Aorta (tissue), 5 donors: ENCODE measurements at regions of chr1 and their contacts with region 1.

Region 1: DNA sequence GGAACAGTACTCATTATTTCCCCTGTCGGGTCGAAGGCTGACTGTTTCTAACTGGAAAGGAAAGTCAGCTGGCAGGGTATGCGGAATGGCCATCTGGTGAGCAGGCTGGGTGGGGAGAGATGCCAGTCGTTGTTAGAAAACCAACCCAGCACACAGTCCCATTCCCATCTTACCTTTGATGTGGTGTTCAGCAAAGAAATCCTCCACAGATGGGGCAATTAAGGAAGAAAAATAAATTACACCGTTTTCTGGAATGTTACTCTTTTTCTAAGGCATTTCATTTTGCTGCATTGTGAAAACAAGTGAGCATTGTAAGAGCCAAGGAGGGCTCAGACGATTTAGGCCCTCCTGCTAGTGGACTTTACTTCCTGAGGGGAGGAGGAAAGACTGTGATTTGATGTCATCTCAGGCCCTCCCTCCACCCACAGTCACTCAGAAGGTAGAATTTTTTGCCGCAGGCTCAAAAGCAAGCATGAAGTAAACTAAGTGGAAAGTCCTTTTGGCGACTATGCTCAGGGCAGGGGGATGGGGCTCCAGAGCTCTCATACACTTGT is at the start of gene SLC16A4:
- DNase-seq: no peak
- ATAC-seq: peak; percentile 88
- H3K4me3 ChIP-seq: peak within 1 kb of the TSS; percentile 62 to 97
- H3K27ac ChIP-seq: peak within 1 kb of the TSS; percentile 69 to 94
- H3K4me1 ChIP-seq: peaks cover 2 to 3% of the 10 kb centered on the region in 2 donors
- H3K27me3 ChIP-seq: no peaks in the 10 kb centered on the region
- total RNA-seq, gene SLC16A4: 18.5 to 23.2 TPM

Region 2: GRCh38 chr1:110292031-110292741 is 98.6 kb before region 1 on chr1:
- intact Hi-C with region 1: no loop called
- DNase-seq: no peak
- ATAC-seq: no peak
- H3K4me3 ChIP-seq: no peak overlapping the region
- H3K27ac ChIP-seq: no peak overlapping the region
- H3K4me1 ChIP-seq: no peaks in the 10 kb centered on the region
- H3K27me3 ChIP-seq: no peaks in the 10 kb centered on the region

Region 3: DNA sequence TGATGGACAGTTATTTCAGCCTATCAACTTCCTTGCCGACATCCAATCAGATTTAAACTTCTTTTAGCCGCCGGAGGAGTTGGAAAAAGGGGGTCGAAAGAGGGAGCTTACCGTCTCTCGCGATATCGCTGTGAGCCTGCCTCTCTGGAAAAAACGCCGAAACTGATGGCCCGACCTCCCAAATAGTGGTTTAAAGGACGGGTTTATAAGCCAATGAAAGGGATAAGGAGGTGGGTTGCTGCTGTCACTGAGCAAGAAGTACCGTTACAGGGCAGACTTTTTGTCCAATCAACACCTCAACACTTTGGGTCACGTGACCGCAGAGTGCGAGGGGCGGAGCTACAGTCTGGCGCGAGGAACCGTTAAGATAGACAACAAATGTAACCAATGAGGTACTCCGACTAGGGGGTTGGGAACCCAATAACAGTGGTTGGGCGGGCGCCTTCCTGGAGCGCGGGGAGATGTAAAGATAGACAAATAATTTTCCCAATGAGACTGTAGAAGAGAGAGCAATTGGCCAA is 51.8 kb before region 1 on chr1 and contains the start of gene RBM15:
- intact Hi-C with region 1: loop called in 1 of 2 experiments (anchors 2 kb)
- DNase-seq: peak; percentile 97 to 99
- ATAC-seq: peak; percentile 95
- H3K4me3 ChIP-seq: peak within 1 kb of the TSS; percentile 78 to 95
- H3K27ac ChIP-seq: peak within 1 kb of the TSS; percentile 62 to 72
- H3K4me1 ChIP-seq: peaks cover 0 to 3% of the 10 kb centered on the region in 2 donors
- H3K27me3 ChIP-seq: no peaks in the 10 kb centered on the region
- total RNA-seq, gene RBM15: 18.7 to 22.5 TPM

Region 4: DNA sequence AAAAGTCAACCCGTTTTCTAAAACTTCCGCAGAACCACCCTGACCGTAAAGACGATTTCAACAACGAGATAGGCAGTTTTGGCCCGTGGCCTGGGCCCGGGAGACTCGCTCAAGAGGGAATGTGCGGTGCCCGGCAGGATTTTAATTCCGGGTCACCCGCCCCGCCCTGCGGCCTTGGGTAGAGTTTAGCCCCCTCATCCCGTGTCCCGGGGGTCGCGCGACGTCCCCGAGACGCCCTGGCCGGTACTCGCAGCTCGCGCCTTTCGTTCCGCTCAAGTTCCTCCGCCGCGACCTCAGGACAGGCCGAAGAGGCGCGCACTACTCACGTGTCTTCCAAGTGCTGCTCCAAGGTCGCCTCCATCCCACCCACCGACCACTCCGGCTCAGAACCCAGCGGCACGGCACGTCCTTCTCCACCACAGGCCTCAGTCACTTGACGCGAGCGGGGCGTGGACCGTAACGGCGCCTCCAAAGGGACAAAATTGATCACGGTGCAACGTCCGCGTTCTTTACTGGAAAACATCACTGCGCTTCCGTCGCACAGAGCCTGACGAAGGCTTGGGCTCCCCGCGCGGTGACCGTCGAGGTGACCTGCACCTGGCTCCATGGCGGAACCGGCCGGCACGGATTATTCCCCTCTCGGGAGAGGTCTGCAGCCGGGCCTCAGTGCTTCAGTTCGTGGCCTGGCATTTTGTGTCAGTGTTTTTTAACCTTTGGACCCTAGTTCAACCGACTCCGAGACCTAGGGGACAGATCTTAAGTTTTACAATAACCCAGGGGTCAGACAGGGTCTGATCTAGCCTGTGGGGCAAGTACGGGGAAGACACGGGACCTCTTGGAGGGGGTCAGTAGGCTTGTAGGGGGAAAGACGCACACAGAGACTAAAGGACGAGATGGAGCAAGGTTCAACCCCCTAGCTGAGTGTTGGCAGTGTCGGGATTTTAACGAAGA is 16.8 kb after region 1 on chr1 and contains the start of gene LAMTOR5:
- intact Hi-C with region 1: loop called in 1 of 2 experiments (anchors 2 kb)
- DNase-seq: peak; percentile 96 to 98
- ATAC-seq: peak; percentile 97
- H3K4me3 ChIP-seq: peak within 1 kb of the TSS; percentile 81 to 82
- H3K27ac ChIP-seq: peak within 1 kb of the TSS; percentile 47 to 81
- H3K4me1 ChIP-seq: no peaks in the 10 kb centered on the region
- H3K27me3 ChIP-seq: no peaks in the 10 kb centered on the region
- total RNA-seq, gene LAMTOR5: 73.6 to 77.6 TPM

Region 5: GRCh38 chr1:110475378-110476027 is 84.7 kb after region 1 on chr1:
- intact Hi-C with region 1: no loop called
- DNase-seq: peak; percentile 20 to 43
- ATAC-seq: no peak
- H3K4me3 ChIP-seq: no peak overlapping the region
- H3K27ac ChIP-seq: no peak overlapping the region
- H3K4me1 ChIP-seq: no peaks in the 10 kb centered on the region
- H3K27me3 ChIP-seq: no peaks in the 10 kb centered on the region